Prostate gland (tissue), 2 donors: ENCODE measurements at regions of chr1 and their contacts with region 1.

Region 1: DNA sequence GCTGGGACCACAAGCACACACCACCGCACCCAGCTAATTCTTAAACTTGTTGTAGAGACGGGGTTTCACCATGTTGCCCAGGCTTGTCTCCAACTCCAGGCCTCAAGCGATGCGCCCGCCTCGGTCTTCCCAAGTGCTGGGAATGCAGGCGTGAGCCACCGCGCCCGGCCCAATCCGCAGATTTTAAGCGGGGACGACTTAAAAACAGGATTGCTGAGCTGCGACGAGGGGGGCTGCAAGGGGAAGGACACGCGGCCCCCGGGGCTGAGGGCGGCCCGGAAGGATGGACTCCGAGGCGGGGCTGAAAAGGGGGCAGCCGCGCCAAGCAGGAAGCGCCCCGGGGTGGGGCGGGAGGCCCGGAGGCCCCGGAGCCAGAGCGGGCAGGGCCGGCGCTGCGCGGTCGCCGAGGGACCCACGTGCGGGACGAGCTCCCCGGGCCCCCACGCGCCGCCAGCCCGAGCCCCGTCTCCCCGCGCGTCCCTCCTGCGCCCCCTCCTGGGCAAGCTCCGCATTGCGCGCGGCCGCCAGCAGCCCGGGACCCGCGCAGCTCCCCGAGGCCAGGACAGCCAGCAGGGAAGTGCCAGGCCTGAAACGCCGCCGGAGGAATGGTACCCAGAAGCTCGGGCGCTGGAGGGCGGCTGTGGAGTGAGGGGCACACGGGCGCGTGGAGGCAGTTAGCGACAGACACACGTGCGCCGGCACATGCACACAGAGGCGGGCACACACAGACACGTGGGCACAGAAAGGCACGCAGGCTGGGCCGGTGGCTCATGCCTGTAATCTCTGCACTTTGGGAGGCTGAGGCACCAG is 5.5 kb upstream of the PRKCZ start:
- DNase-seq: peak; percentile 56
- H3K4me3 ChIP-seq: peak overlapping the region; percentile 9 to 17
- H3K27ac ChIP-seq: no peak overlapping the region
- H3K4me1 ChIP-seq: peaks cover 3% of the 10 kb centered on the region
- H3K27me3 ChIP-seq: no peaks in the 10 kb centered on the region
- CTCF ChIP-seq: peak; percentile 82 to 95 (median 91)
- POLR2A ChIP-seq: no peak

Region 2: DNA sequence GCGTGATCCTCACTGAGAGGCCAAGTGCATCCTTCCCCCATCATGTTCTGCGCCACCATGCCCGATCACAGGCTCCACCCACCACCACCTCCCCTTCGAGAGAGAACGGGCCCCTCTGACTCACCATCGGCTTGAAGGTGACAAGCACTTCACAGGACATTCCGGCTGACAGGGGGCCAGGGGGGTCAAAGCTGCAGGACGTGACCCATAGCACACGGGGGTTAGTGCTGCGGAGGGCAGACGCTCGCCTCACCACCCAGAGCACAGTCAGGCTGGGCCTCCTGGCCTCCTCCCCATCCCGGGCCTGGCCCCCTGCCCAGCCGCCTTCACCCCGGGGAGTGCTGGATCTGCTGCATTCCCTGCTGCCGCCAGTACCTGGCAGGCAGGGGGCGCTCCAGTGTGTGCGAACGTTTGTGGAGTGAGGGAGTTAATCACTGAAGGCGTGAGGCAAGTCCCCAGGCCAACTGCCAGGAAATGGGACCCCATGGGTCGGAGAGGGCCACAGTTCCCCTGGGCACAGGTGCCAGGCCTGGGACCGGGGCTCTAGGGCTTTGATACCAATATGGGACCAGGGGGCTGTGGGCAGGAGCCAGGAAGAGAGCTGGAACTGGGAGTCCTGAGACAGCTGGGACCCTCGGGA is 84.8 kb before region 1 on chr1:
- intact Hi-C with region 1: loop called (anchors 10 kb)
- DNase-seq: peak; percentile 81
- H3K4me3 ChIP-seq: no peak overlapping the region
- H3K27ac ChIP-seq: no peak overlapping the region
- H3K4me1 ChIP-seq: no peaks in the 10 kb centered on the region
- H3K27me3 ChIP-seq: no peaks in the 10 kb centered on the region
- CTCF ChIP-seq: peak; percentile 44 to 90 (median 86)
- POLR2A ChIP-seq: no peak

Region 3: GRCh38 chr1:2019172-2019543 is 25.6 kb before region 1 on chr1 and contains the start of gene GABRD:
- intact Hi-C with region 1: no loop called
- DNase-seq: no peak
- H3K4me3 ChIP-seq: peak within 1 kb of the TSS; percentile 14 to 36
- H3K27ac ChIP-seq: no peak within 1 kb of the TSS
- H3K4me1 ChIP-seq: no peaks in the 10 kb centered on the region
- H3K27me3 ChIP-seq: peaks cover 25% of the 10 kb centered on the region
- CTCF ChIP-seq: no peak
- POLR2A ChIP-seq: no peak
- total RNA-seq, gene GABRD: 0.32 to 7.6 TPM

Region 4: GRCh38 chr1:2133039-2133878 is 88.5 kb after region 1 on chr1:
- intact Hi-C with region 1: no loop called
- DNase-seq: peak; percentile 96
- H3K4me3 ChIP-seq: peak overlapping the region; percentile 29 to 35
- H3K27ac ChIP-seq: peak overlapping the region; percentile 82 to 96
- H3K4me1 ChIP-seq: peaks cover 19% of the 10 kb centered on the region
- H3K27me3 ChIP-seq: no peaks in the 10 kb centered on the region
- CTCF ChIP-seq: peak in 1 of 4 experiments; percentile 30
- POLR2A ChIP-seq: peak; percentile 62